PC-9 (cell line): ENCODE measurements at regions of chr12 and their contacts with region 1.

Region 1: DNA sequence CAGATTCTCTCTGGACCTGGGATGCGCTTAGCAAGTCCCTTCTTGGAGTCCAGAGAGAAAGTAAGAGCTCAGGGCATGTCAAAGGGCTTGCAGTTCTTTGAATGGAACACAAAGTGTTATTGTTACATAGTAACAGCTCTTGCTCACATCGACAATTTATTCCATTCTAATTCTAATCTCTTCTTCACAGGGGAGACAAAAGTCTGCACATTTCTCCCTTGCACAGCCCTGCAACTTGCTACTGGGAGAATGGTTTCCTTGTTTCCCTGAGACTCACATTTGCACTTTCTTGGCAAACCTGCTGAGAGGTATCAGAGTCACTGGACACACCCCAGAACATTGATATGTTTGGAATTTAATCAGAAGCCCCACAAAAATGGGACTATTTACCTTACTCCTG is 209.9 kb upstream of the IGF1 start:
- DNase-seq: peak in 1 of 2 experiments; percentile 52
- H3K4me3 ChIP-seq: no peak overlapping the region
- H3K27ac ChIP-seq: no peak overlapping the region
- H3K4me1 ChIP-seq: peaks cover 28% of the 10 kb centered on the region
- H3K27me3 ChIP-seq: no peaks in the 10 kb centered on the region
- CTCF ChIP-seq: no peak

Region 2: GRCh38 chr12:102010265-102010994 is 679.8 kb before region 1 on chr12:
- CTCF ChIA-PET with region 1: no interaction called
- POLR2A ChIA-PET with region 1: no interaction called
- intact Hi-C with region 1: no loop called
- DNase-seq: no peak
- H3K4me3 ChIP-seq: no peak overlapping the region
- H3K27ac ChIP-seq: no peak overlapping the region
- H3K4me1 ChIP-seq: no peaks in the 10 kb centered on the region
- H3K27me3 ChIP-seq: no peaks in the 10 kb centered on the region
- CTCF ChIP-seq: no peak

Region 3: DNA sequence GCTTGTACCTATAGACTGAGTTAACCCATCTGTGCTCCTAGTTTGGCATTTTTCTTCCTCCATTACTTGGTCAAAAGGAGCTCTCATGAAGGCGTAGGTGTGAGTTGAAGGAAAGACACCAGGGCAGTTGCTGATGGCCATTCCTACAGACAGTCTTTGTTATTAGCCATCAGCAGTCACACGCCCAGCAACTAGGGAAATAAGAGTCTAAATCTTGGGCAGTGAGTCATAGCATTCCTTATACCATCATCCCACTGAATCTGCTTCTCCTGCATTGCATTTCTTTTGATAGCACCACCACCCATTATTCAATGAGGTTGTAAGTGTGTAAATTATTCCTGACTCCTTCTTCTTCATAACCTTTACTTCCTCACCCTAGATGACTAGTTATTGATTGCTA is 59.0 kb before region 1 on chr12:
- CTCF ChIA-PET with region 1: no interaction called
- POLR2A ChIA-PET with region 1: no interaction called
- intact Hi-C with region 1: loop called (anchors 5 kb)
- DNase-seq: peak; percentile 33 to 69
- H3K4me3 ChIP-seq: no peak overlapping the region
- H3K27ac ChIP-seq: no peak overlapping the region; the same call in 1 of the 2 replicates
- H3K4me1 ChIP-seq: peaks cover 11% of the 10 kb centered on the region
- H3K27me3 ChIP-seq: no peaks in the 10 kb centered on the region
- CTCF ChIP-seq: no peak